CD4-positive, alpha-beta T cell (primary cell): ENCODE measurements at regions of chr1 and their contacts with region 1.

Region 1: DNA sequence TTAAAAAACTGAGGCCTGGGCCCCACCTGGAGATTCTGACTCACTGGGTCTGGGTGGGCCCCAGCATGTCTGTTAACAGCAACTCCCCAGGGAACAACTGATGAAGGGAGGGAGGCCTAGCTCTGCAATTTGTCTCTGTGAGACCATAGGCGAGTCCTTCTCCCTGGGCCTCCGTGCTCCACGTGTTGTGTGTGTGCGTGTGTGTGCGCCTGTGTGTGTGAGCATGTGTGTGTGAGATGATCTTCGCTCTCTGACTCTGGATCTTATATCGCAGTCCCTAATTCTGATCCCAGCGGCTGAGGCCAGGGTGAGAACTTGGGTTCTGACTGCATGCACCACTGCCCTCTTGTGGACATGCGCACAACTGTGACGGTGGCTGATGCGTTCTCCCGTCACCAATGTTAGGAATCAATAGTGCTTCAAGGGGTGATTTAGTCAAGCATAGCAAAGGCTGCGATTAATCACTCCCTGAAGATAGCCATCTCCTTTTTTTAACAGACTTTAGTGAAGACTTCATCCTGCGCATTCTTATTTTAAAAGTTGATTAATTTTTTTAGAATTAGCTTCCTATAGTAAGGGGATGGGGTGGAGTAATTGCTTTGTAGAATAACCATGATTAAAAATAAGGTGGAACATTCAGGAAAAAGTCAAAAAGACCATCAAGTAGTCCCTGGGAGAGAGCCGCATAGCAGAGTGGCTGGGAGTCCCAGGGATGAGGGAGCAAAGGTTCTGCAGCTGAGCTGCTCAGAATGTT is 62.4 kb upstream of the USP24 start:
- DNase-seq: peak; percentile 68 to 88 (median 74)
- ATAC-seq: peak; percentile 99
- H3K4me3 ChIP-seq: no peak overlapping the region
- H3K4me3 Mint-ChIP-seq: no peak overlapping the region
- H3K27ac ChIP-seq: no peak overlapping the region
- H3K27ac Mint-ChIP-seq: no peak overlapping the region
- H3K4me1 ChIP-seq: peaks cover 5% of the 10 kb centered on the region
- H3K4me1 Mint-ChIP-seq: peaks cover 5% of the 10 kb centered on the region
- H3K27me3 ChIP-seq: no peaks in the 10 kb centered on the region
- H3K27me3 Mint-ChIP-seq: no peaks in the 10 kb centered on the region
- CTCF ChIP-seq: peak; percentile 76

Region 2: DNA sequence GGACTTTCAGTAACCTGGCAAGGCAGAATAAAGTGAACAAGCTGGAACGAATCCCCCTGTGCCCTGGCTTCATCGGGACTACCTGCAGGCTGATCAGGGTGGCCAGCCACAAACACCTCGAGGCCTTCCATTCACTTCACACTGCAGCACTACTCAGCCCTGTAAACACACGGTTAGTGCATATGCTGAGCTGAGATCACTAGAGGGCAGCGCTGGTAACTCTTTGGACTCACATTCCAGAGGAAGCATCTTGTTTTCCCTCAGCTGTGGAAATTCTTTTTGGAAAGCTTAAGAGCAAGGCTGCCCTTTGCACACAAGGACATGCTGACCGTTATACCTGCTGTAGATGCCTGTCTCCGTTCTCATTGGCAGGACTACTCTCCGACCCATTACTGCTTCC is 206.1 kb before region 1 on chr1:
- CTCF ChIA-PET with region 1: no interaction called
- POLR2A ChIA-PET with region 1: no interaction called
- intact Hi-C with region 1: loop called in 1 of 2 experiments (anchors 10 kb)
- DNase-seq: peak in 1 of 14 experiments; percentile 8
- ATAC-seq: no peak
- H3K4me3 ChIP-seq: no peak overlapping the region
- H3K4me3 Mint-ChIP-seq: no peak overlapping the region
- H3K27ac ChIP-seq: no peak overlapping the region
- H3K27ac Mint-ChIP-seq: peak overlapping the region; percentile 36
- H3K4me1 ChIP-seq: no peaks in the 10 kb centered on the region
- H3K4me1 Mint-ChIP-seq: no peaks in the 10 kb centered on the region
- H3K27me3 ChIP-seq: no peaks in the 10 kb centered on the region
- H3K27me3 Mint-ChIP-seq: no peaks in the 10 kb centered on the region
- CTCF ChIP-seq: no peak

Region 3: DNA sequence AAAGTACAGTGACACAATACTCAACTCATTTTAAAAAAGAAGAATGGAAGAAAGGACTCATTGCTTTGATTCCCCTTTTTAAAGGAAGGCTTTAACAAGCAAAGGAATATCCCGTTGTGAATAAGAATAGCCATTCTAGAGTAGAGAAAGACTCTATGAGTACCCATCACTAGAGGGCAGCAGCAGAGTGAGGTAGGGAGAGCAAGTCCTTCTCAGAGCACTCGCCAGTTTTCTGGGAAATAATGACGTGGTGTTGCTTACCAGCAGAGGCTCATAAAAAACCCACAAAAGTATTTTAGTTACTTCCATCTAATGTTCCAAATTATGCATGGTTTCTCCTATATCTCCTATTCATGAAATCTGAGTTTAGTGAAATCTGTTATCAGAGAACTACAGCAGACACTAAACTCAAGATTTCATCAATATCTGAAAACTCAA is 137.0 kb before region 1 on chr1:
- CTCF ChIA-PET with region 1: interaction called, 15 read pairs
- POLR2A ChIA-PET with region 1: interaction called, 3 read pairs
- intact Hi-C with region 1: loop called (anchors 1 kb)
- DNase-seq: peak; percentile 26 to 90 (median 58)
- ATAC-seq: peak; percentile 94
- H3K4me3 ChIP-seq: no peak overlapping the region
- H3K4me3 Mint-ChIP-seq: no peak overlapping the region
- H3K27ac ChIP-seq: peak overlapping the region in 1 of 2 donors; percentile 7
- H3K27ac Mint-ChIP-seq: peak overlapping the region; percentile 70
- H3K4me1 ChIP-seq: no peaks in the 10 kb centered on the region
- H3K4me1 Mint-ChIP-seq: peaks cover 10% of the 10 kb centered on the region
- H3K27me3 ChIP-seq: no peaks in the 10 kb centered on the region
- H3K27me3 Mint-ChIP-seq: no peaks in the 10 kb centered on the region
- CTCF ChIP-seq: peak; percentile 88

Region 4: DNA sequence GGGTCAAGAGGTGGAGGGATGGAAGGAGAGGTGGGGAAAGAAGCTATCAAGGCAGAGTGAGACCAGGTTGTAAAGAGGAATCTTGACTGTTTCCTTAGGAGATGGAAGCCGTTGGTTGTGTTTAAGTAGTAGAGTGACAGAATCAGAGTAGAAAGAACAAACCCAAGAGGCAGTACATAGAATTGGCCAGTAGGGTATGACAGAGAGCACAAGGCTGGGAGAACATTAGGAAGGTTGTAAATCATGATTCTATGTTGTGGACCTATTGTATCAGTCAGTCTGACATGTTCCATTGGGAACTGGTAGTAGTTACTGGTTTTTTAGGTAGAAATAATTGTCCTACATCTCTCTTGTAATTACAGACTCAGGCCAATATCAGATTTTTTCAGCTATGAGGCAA is 424.5 kb after region 1 on chr1:
- CTCF ChIA-PET with region 1: no interaction called
- POLR2A ChIA-PET with region 1: no interaction called
- intact Hi-C with region 1: no loop called
- DNase-seq: no peak
- ATAC-seq: no peak
- H3K4me3 ChIP-seq: no peak overlapping the region
- H3K4me3 Mint-ChIP-seq: no peak overlapping the region
- H3K27ac ChIP-seq: no peak overlapping the region
- H3K27ac Mint-ChIP-seq: no peak overlapping the region
- H3K4me1 ChIP-seq: no peaks in the 10 kb centered on the region
- H3K4me1 Mint-ChIP-seq: no peaks in the 10 kb centered on the region
- H3K27me3 ChIP-seq: peaks cover 3% of the 10 kb centered on the region in 2 experiments
- H3K27me3 Mint-ChIP-seq: peaks cover 11% of the 10 kb centered on the region
- CTCF ChIP-seq: peak; percentile 25